Calu3 (cell line): ENCODE measurements at regions of chr7 and their contacts with region 1.

Region 1: GRCh38 chr7:44986218-44987053 is 7.6 kb upstream of the MYO1G start:
- DNase-seq: peak; percentile 98
- H3K4me3 Mint-ChIP-seq: peak overlapping the region; percentile 86
- H3K27ac Mint-ChIP-seq: peak overlapping the region; percentile 98
- H3K4me1 Mint-ChIP-seq: peaks cover 66% of the 10 kb centered on the region
- H3K27me3 Mint-ChIP-seq: no peaks in the 10 kb centered on the region
- CTCF ChIP-seq: no peak

Region 2: GRCh38 chr7:44973610-44974401 is 12.6 kb before region 1 on chr7:
- CTCF ChIA-PET with region 1: interaction called, 30 read pairs
- intact Hi-C with region 1: no loop called
- DNase-seq: peak; percentile 68
- H3K4me3 Mint-ChIP-seq: no peak overlapping the region
- H3K27ac Mint-ChIP-seq: no peak overlapping the region
- H3K4me1 Mint-ChIP-seq: peaks cover 11% of the 10 kb centered on the region
- H3K27me3 Mint-ChIP-seq: peaks cover 17% of the 10 kb centered on the region
- CTCF ChIP-seq: peak; percentile 70

Region 3: GRCh38 chr7:45073786-45074527 is 87.5 kb after region 1 on chr7:
- CTCF ChIA-PET with region 1: no interaction called
- intact Hi-C with region 1: no loop called
- DNase-seq: peak; percentile 42
- H3K4me3 Mint-ChIP-seq: no peak overlapping the region
- H3K27ac Mint-ChIP-seq: peak overlapping the region; percentile 60
- H3K4me1 Mint-ChIP-seq: peaks cover 14% of the 10 kb centered on the region
- H3K27me3 Mint-ChIP-seq: no peaks in the 10 kb centered on the region
- CTCF ChIP-seq: no peak

Region 4: GRCh38 chr7:45111298-45112223 is 125.1 kb after region 1 on chr7 and contains the start of gene TBRG4:
- CTCF ChIA-PET with region 1: no interaction called
- intact Hi-C with region 1: loop called (anchors 1 kb)
- DNase-seq: peak; percentile 98
- H3K4me3 Mint-ChIP-seq: peak within 1 kb of the TSS; percentile 96
- H3K27ac Mint-ChIP-seq: peak within 1 kb of the TSS; percentile 99
- H3K4me1 Mint-ChIP-seq: peaks cover 31% of the 10 kb centered on the region
- H3K27me3 Mint-ChIP-seq: peaks cover 32% of the 10 kb centered on the region
- CTCF ChIP-seq: peak; percentile 21
- total RNA-seq, gene TBRG4: 191 and 199 TPM in 2 replicates